Breast epithelium (tissue), 4 donors: ENCODE measurements at regions of chrX and their contacts with region 1.

Region 1: GRCh38 chrX:39574178-39574577 is 523.6 kb downstream of the BCOR start:
- DNase-seq: no peak
- H3K4me3 ChIP-seq: no peak overlapping the region
- H3K27ac ChIP-seq: no peak overlapping the region
- H3K4me1 ChIP-seq: no peaks in the 10 kb centered on the region
- H3K27me3 ChIP-seq: peaks cover 0 to 75% of the 10 kb centered on the region in 2 donors
- CTCF ChIP-seq: no peak
- POLR2A ChIP-seq: no peak

Region 2: GRCh38 chrX:39652336-39653131 is 78.4 kb after region 1 on chrX:
- intact Hi-C with region 1: no loop called
- DNase-seq: no peak
- H3K4me3 ChIP-seq: no peak overlapping the region
- H3K27ac ChIP-seq: no peak overlapping the region
- H3K4me1 ChIP-seq: no peaks in the 10 kb centered on the region
- H3K27me3 ChIP-seq: peaks cover 0 to 78% of the 10 kb centered on the region in 2 donors
- CTCF ChIP-seq: peak in 1 of 3 donors; percentile 14
- POLR2A ChIP-seq: no peak

Region 3: GRCh38 chrX:40022421-40022820 is 448.2 kb after region 1 on chrX:
- intact Hi-C with region 1: loop called (anchors 5 kb)
- DNase-seq: no peak
- H3K4me3 ChIP-seq: no peak overlapping the region
- H3K27ac ChIP-seq: no peak overlapping the region
- H3K4me1 ChIP-seq: no peaks in the 10 kb centered on the region
- H3K27me3 ChIP-seq: peaks cover 0 to 8% of the 10 kb centered on the region in 2 donors
- CTCF ChIP-seq: no peak
- POLR2A ChIP-seq: no peak